ENCODE measurements at regions of chr1 and their contacts with region 1.

Region 1: DNA sequence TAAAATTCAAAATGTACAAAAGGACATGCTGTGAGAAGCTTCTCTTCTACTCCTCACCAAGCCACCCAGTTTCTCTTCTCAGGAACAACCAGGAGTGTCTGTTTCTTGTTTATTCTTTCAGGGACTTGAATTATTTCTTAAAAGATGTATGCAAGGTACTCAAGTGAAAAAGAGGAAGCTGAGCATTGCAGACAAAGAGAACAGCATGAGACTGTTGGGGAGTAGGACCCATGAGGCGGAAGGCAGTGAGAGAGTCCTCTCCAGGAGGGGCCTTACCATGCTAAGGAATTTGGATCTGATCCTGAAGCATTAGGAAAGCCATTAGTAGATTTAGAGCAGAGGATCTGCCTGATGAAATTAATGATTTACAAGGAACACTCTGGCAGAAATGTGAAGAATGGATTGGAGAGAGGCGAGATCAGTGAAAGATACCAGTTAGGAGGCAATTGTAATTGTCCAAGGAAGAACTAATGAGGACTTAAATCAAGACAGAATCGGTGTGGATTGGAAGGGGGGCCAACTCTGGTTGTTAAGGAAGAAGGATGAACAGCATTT is 14.7 kb upstream of the SSX2IP start:
- DNase-seq: no peak
- CTCF ChIP-seq: no peak

Region 2: GRCh38 chr1:84693005-84693404 is 11.9 kb before region 1 on chr1:
- CTCF ChIA-PET with region 1: interaction called, 17 read pairs
- POLR2A ChIA-PET with region 1: no interaction called
- DNase-seq: no peak
- CTCF ChIP-seq: no peak